Mammary epithelial cell (primary cell): ENCODE measurements at regions of chr12 and their contacts with region 1.

Region 1: DNA sequence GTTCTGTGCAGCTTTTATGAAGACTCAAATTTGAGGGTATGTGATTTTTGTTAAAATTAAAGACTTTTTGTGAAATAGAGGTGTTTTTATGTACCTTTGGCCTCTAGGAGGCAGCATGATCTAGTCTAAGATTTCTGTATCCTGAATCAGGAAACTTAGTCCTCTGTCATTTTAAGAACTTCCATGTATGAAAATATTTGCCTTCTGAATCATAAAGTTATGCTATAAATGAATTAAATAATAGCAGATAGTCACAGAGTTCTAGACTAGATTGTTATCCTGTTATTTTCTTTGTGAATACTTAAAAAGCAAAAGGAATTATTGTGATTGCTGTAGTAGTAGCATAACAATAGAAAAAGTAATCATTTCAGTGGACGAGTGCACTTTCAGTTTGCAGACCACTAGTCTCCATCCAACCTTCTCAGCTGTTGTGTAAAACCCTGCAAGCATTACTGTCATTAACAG is 56.3 kb downstream of the FGD4 start:
- DNase-seq: peak; percentile 58
- H3K4me3 ChIP-seq: peak overlapping the region; percentile 25 to 56 (median 50)
- H3K27ac ChIP-seq: peak overlapping the region; percentile 94
- H3K4me1 ChIP-seq: peaks cover 52% of the 10 kb centered on the region
- H3K27me3 ChIP-seq: no peaks in the 10 kb centered on the region
- CTCF ChIP-seq: peak; percentile 63 to 65

Region 2: GRCh38 chr12:32365473-32366064 is 90.1 kb before region 1 on chr12:
- CTCF ChIA-PET with region 1: no interaction called
- dilution Hi-C with region 1: no loop called
- in situ Hi-C with region 1: no loop called
- intact Hi-C with region 1: loop called (anchors 1 kb)
- DNase-seq: peak; percentile 62
- H3K4me3 ChIP-seq: no peak overlapping the region
- H3K27ac ChIP-seq: no peak overlapping the region
- H3K4me1 ChIP-seq: peaks cover 4% of the 10 kb centered on the region
- H3K27me3 ChIP-seq: no peaks in the 10 kb centered on the region
- CTCF ChIP-seq: peak; percentile 82 to 91

Region 3: GRCh38 chr12:32437095-32437515 is 18.5 kb before region 1 on chr12:
- CTCF ChIA-PET with region 1: no interaction called
- dilution Hi-C with region 1: no loop called
- in situ Hi-C with region 1: no loop called
- intact Hi-C with region 1: loop called (anchors 2 kb)
- DNase-seq: peak; percentile 90
- H3K4me3 ChIP-seq: no peak overlapping the region
- H3K27ac ChIP-seq: peak overlapping the region; percentile 87
- H3K4me1 ChIP-seq: peaks cover 54% of the 10 kb centered on the region
- H3K27me3 ChIP-seq: no peaks in the 10 kb centered on the region
- CTCF ChIP-seq: no peak

Region 4: GRCh38 chr12:32671930-32672780 is 216.5 kb after region 1 on chr12:
- CTCF ChIA-PET with region 1: no interaction called
- dilution Hi-C with region 1: no loop called
- in situ Hi-C with region 1: no loop called
- intact Hi-C with region 1: loop called (anchors 1 kb)
- DNase-seq: peak; percentile 37
- H3K4me3 ChIP-seq: no peak overlapping the region
- H3K27ac ChIP-seq: no peak overlapping the region
- H3K4me1 ChIP-seq: no peaks in the 10 kb centered on the region
- H3K27me3 ChIP-seq: no peaks in the 10 kb centered on the region
- CTCF ChIP-seq: peak; percentile 53 to 63

Region 5: GRCh38 chr12:32737715-32738114 is 282.1 kb after region 1 on chr12:
- CTCF ChIA-PET with region 1: no interaction called
- dilution Hi-C with region 1: no loop called
- in situ Hi-C with region 1: no loop called
- intact Hi-C with region 1: loop called (anchors 5 kb)
- DNase-seq: no peak
- H3K4me3 ChIP-seq: no peak overlapping the region
- H3K27ac ChIP-seq: no peak overlapping the region
- H3K4me1 ChIP-seq: no peaks in the 10 kb centered on the region
- H3K27me3 ChIP-seq: no peaks in the 10 kb centered on the region
- CTCF ChIP-seq: no peak